Right ventricle myocardium superior (tissue), 1 donor: ENCODE measurements at regions of chr1 and their contacts with region 1.

Region 1: DNA sequence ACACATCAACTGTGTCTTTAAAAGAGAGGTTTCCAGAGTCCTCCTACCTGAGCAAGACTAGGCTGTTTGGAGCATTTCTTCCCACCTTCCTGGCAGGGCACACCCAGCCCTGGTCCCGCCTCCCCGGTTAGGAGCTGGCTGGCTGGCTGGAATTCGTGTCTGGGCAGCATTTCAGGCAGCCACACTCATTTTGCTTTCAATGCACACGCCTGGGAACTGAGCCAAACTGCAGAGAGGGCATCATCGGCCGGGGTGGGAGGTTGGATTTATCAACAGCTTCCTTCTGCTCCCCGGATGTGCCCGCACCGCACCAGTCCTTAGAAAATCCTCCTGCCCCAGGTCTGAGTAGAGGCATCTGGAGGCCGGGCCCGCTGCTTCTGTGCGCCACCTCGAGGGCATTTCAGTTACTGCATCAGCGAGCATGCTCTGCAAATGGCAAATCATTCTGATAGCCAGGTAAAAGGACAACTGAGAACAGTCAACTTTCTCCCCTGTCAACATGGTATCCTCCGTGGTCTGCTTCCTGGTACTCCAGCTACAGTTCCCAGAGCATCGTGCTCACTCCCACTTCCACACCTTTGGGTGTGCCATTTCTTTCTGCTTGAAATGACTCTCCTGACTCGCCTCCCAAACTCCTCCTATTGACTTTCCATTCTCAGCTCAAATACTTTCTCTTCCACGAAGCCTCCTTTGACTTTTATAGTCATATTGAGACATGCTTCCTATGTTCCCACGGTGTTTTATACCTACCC is 20.6 kb downstream of the TCEA3 start:
- DNase-seq: peak; percentile 91
- ATAC-seq: peak; percentile 86

Region 2: DNA sequence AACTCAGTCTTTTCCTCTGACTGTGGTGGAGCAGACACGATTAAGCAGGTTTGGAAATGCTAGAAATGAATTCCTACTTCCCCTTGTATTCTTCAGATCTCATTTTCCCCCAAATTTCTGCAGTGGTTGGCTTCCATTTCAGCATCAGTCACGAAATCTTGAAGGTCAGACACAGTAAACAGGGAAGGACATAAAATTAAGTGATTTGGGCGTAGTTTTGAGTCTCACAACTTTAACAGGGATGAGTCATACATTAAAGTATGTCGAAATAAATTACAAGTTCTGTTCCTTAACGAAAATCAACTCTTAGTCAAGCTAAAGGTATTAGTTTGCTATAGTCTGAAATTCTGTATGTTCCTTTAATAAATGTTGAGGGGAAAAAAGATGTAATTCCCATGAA is 121.0 kb before region 1 on chr1:
- intact Hi-C with region 1: loop called (anchors 10 kb)
- DNase-seq: no peak
- ATAC-seq: no peak

Region 3: GRCh38 chr1:23367791-23368561 is 35.9 kb before region 1 on chr1:
- intact Hi-C with region 1: loop called (anchors 5 kb)
- DNase-seq: peak; percentile 99
- ATAC-seq: peak; percentile 94

Region 4: GRCh38 chr1:23539698-23540266 is 135.9 kb after region 1 on chr1:
- intact Hi-C with region 1: no loop called
- DNase-seq: peak; percentile 90
- ATAC-seq: peak; percentile 92